Psoas muscle (tissue), 8 donors: ENCODE measurements at regions of chr3 and their contacts with region 1.

Region 1: DNA sequence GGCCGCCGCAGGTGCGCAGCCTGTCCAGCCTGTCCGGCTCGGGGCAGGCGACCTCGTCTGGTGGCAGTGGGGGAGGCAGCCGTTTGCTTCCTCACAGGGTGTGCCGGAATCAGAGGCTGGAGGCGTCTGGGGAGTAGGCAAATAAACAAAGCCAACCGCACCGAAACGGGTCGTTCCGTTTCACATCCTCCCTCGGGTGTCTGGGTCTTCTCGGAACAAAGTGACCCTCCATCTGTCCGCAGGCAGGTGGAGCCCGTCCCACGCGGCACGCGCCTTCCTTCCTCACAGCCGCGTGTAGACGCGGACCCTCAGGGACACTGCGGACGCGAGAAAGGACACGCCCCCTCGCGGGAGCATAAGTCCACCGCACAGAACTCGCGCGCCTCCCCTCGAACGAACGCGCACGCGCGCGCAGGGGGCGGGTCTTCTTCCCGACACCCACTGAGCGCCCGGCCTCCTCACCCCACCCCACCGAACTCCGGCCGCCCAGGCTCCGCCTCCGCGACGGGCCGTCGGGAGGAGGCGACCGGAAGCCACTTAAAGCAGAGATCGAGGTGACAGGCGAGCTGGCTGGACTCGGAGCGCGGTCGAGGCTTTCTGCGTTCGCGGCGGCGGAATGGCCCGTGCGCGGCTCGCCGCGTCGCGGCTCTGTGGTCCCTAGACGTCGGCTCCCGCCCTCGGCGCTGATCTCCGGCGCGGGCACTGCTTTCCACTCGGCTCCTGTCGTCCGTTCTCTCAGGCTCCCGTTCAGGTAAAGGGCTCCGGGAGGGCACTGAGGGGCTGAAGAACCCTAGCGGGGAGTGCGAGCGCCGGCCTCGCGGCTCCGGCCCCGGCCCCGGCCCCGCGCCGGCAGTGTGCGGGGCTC is at the start of gene TIPARP:
- DNase-seq: peak; percentile 100
- ATAC-seq: peak; percentile 95 to 97 (median 96)
- H3K4me3 ChIP-seq: peak within 1 kb of the TSS; percentile 88
- H3K27ac ChIP-seq: peak within 1 kb of the TSS; percentile 96
- H3K4me1 ChIP-seq: peaks cover 37% of the 10 kb centered on the region
- H3K27me3 ChIP-seq: no peaks in the 10 kb centered on the region
- CTCF ChIP-seq: peak; percentile 68
- total RNA-seq, gene TIPARP: 10.5 to 18.1 (median 16.0) TPM

Region 2: GRCh38 chr3:156633335-156633734 is 40.9 kb before region 1 on chr3:
- intact Hi-C with region 1: loop called (anchors 5 kb)
- DNase-seq: peak in 1 of 2 donors; percentile 43
- ATAC-seq: peak; percentile 39 to 66 (median 50)
- H3K4me3 ChIP-seq: no peak overlapping the region
- H3K27ac ChIP-seq: no peak overlapping the region
- H3K4me1 ChIP-seq: peaks cover 23% of the 10 kb centered on the region
- H3K27me3 ChIP-seq: no peaks in the 10 kb centered on the region
- CTCF ChIP-seq: no peak

Region 3: GRCh38 chr3:156816800-156817645 is 142.7 kb after region 1 on chr3:
- intact Hi-C with region 1: loop called (anchors 5 kb)
- DNase-seq: peak; percentile 86 to 90
- ATAC-seq: peak; percentile 89 to 92 (median 90)
- H3K4me3 ChIP-seq: peak overlapping the region; percentile 73
- H3K27ac ChIP-seq: peak overlapping the region; percentile 85
- H3K4me1 ChIP-seq: peaks cover 17% of the 10 kb centered on the region
- H3K27me3 ChIP-seq: no peaks in the 10 kb centered on the region
- CTCF ChIP-seq: no peak

Region 4: GRCh38 chr3:157130467-157131251 is 456.4 kb after region 1 on chr3:
- intact Hi-C with region 1: loop called in 1 of 2 experiments (anchors 10 kb)
- DNase-seq: peak; percentile 61 to 83
- ATAC-seq: peak; percentile 52 to 72 (median 61)
- H3K4me3 ChIP-seq: peak overlapping the region; percentile 45
- H3K27ac ChIP-seq: peak overlapping the region; percentile 74
- H3K4me1 ChIP-seq: peaks cover 40% of the 10 kb centered on the region
- H3K27me3 ChIP-seq: no peaks in the 10 kb centered on the region
- CTCF ChIP-seq: peak; percentile 60